ENCODE measurements at regions of chr22 and their contacts with region 1.

Region 1: DNA sequence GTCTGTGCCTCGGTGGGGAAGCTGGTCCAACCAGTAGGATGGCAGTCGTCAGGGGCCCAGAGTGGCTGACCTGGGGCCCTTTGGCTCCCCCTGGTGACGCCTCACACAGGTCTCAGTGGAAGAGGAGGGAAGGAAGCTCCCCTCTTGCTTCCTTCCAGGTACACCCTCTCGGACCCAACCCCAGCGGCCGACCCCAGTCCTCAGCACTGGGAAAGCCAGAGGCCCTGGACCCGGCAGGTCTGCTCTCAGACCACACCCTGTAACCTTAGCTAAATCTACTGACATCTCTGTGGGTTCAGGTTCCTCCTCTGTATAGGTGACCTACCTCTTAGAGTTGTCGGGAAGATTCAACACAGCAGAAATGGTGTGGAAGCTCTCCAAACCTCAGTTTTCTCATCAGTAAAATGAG is 3.4 kb upstream of the SCUBE1 start:
- DNase-seq: peak; percentile 47 to 62
- ATAC-seq: peak in 7 of 8 donors; percentile 48 to 84 (median 78)
- H3K4me3 ChIP-seq: no peak overlapping the region
- H3K27ac ChIP-seq: no peak overlapping the region
- H3K4me1 ChIP-seq: peaks cover 0 to 23% (median 0%) of the 10 kb centered on the region in 9 donors
- H3K27me3 ChIP-seq: peaks cover 20 to 87% (median 71%) of the 10 kb centered on the region in 7 donors
- CTCF ChIP-seq: peak; percentile 44 to 84 (median 74)

Region 2: GRCh38 chr22:43230971-43231723 is 115.4 kb before region 1 on chr22:
- intact Hi-C with region 1: loop called in 8 of 10 experiments (anchors 2 to 10 kb)
- DNase-seq: peak; percentile 38 to 60
- ATAC-seq: peak in 6 of 8 donors; percentile 21 to 57 (median 35)
- H3K4me3 ChIP-seq: no peak overlapping the region
- H3K27ac ChIP-seq: no peak overlapping the region
- H3K4me1 ChIP-seq: peaks cover 0 to 7% (median 2%) of the 10 kb centered on the region in 9 donors
- H3K27me3 ChIP-seq: peaks cover 0 to 37% (median 9%) of the 10 kb centered on the region in 7 donors
- CTCF ChIP-seq: peak; percentile 82 to 96 (median 93)

Region 3: GRCh38 chr22:43236411-43237166 is 109.9 kb before region 1 on chr22:
- intact Hi-C with region 1: loop called in 7 of 10 experiments (anchors 2 to 10 kb)
- DNase-seq: peak; percentile 78 to 80
- ATAC-seq: peak; percentile 72 to 95 (median 86)
- H3K4me3 ChIP-seq: no peak overlapping the region
- H3K27ac ChIP-seq: no peak overlapping the region
- H3K4me1 ChIP-seq: peaks cover 0 to 47% (median 30%) of the 10 kb centered on the region in 9 donors
- H3K27me3 ChIP-seq: peaks cover 0 to 23% (median 9%) of the 10 kb centered on the region in 7 donors
- CTCF ChIP-seq: no peak

Region 4: GRCh38 chr22:43273902-43274484 is 72.5 kb before region 1 on chr22:
- intact Hi-C with region 1: loop called (anchors 1 to 5 kb)
- DNase-seq: peak in 1 of 2 donors; percentile 39
- ATAC-seq: peak; percentile 44 to 78 (median 63)
- H3K4me3 ChIP-seq: no peak overlapping the region
- H3K27ac ChIP-seq: no peak overlapping the region
- H3K4me1 ChIP-seq: no peaks in the 10 kb centered on the region
- H3K27me3 ChIP-seq: peaks cover 0 to 52% (median 4%) of the 10 kb centered on the region in 7 donors
- CTCF ChIP-seq: peak; percentile 34 to 79 (median 72)

Region 5: DNA sequence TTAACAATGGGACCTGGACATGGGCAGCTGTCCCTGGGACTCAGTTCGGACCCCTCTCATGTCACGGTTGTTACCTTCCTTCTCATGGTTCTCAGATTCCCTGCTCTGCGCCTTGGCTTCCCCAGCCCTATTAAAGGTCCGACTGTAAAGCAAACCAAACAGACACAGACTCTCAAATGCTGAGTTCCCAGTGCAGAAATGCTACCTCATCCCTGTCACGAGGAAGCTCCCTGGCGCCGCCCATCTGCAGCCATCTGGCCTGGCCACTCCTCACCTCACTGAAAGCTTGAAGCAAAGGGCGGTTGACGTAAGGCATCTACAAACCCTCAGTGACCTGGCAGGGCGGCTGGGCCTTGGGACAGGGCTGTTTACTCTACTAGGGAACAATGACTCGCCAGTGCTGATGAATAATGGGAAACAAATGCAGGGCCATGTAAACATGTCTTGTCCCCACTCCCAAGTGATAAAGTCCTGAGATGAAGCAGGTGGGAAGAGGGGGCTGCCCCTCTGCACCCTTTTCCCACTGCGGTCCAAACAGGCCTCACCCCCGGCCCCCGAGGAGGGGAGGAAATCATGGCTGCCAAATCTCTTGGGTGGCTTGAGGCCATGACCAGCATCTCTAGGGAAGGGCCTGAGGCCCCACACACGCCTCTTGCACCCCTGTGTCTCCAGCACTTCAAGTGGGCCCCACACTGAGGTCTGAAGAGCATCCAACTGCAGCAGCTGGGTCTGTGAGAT is 52.7 kb before region 1 on chr22:
- intact Hi-C with region 1: loop called in 2 of 10 experiments (anchors 5 kb)
- DNase-seq: peak in 1 of 2 donors; percentile 45
- ATAC-seq: no peak
- H3K4me3 ChIP-seq: no peak overlapping the region
- H3K27ac ChIP-seq: no peak overlapping the region
- H3K4me1 ChIP-seq: peaks cover 2 to 43% (median 23%) of the 10 kb centered on the region in 9 donors
- H3K27me3 ChIP-seq: no peaks in the 10 kb centered on the region
- CTCF ChIP-seq: no peak

Region 6: DNA sequence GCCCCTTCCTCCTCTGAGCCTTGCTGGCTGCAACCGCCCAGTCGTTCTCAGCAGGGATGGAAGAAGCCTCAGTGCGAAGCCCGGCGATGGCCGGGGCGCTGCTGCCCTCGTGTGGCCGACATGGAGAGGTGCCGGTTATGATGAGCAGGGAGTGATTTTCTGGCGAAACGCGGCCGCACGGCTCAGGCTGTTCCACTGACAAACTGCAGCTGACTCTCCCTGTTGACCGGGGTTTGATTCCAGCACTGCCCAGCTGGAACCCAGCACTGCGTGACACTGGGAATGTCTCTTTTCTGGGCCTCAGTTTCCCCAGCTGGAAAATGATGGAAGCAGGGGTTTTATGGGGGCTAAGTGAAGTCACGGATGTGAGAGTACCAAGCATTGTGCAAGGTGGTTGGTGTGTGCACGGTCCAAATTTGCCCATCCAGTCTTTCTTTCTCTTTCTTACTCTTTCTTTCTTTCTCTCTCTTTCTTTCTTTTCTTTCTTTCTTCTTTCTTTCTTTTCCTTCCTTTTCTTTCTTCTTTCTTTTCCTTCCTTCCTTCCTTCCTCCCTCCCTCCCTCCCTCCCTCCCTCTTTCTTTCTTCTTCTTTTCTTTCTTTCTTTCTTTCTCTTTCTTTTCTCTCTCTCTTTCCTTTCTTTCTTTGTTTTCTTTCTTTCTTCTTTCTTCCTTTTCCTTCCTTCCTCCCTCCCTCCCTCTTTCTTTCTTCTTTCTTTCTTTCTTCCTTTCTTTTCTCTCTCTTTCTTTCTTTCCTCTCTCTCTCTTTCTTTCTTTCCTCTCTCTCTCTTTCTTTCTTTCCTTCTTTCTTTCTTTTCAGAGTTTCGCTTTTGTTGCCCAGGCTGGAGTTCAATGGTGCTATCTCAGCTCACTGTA is 39.5 kb after region 1 on chr22:
- intact Hi-C with region 1: no loop called
- DNase-seq: peak; percentile 56 to 80
- ATAC-seq: peak; percentile 71 to 93 (median 90)
- H3K4me3 ChIP-seq: no peak overlapping the region
- H3K27ac ChIP-seq: no peak overlapping the region
- H3K4me1 ChIP-seq: peaks cover 0 to 6% (median 0%) of the 10 kb centered on the region in 9 donors
- H3K27me3 ChIP-seq: peaks cover 0 to 68% (median 40%) of the 10 kb centered on the region in 7 donors
- CTCF ChIP-seq: peak; percentile 79 to 96 (median 90)

Region 7: GRCh38 chr22:43750791-43751190 is 404.3 kb after region 1 on chr22:
- intact Hi-C with region 1: no loop called
- DNase-seq: no peak
- ATAC-seq: no peak
- H3K4me3 ChIP-seq: no peak overlapping the region
- H3K27ac ChIP-seq: no peak overlapping the region
- H3K4me1 ChIP-seq: no peaks in the 10 kb centered on the region
- H3K27me3 ChIP-seq: no peaks in the 10 kb centered on the region
- CTCF ChIP-seq: no peak